ENCODE measurements at regions of chr2 and their contacts with region 1.

Region 1: DNA sequence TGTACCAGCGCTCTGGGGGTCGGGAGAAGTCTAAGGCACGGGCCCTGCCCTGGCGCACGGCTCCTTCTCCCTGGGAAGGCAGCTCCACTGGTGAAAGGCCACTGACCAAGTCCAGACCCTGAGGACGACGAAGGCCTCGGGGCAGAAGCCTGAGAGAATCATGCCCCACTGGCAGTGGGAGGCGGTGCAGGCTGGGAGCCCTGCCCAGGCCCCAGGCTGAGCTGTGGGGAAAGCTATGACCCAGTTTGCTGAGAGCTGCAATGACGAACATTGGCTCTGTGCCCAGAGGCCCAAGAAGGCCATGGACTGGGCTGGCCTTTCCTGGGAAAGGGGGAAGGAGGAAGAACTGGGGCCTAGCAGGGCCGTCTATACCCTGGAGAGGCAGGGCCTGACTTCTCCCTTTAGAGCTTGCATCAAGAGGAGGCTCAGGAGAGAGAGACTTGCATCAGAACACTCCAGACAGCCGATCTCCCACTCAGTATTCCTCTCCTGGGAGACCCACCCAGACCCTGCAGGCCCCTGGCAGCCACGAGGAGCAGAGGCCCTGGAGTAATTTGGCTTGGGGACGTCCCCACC is 32.9 kb downstream of the HS1BP3 start:
- DNase-seq: peak; percentile 98 to 99
- ATAC-seq: peak; percentile 92
- H3K4me3 ChIP-seq: no peak overlapping the region
- H3K27ac ChIP-seq: peak overlapping the region; percentile 89 to 99
- H3K4me1 ChIP-seq: peaks cover 2 to 5% of the 10 kb centered on the region in 2 donors
- H3K27me3 ChIP-seq: no peaks in the 10 kb centered on the region

Region 2: GRCh38 chr2:20516646-20517341 is 101.2 kb before region 1 on chr2:
- intact Hi-C with region 1: loop called in 1 of 2 experiments (anchors 10 kb)
- DNase-seq: no peak
- ATAC-seq: peak; percentile 56
- H3K4me3 ChIP-seq: no peak overlapping the region
- H3K27ac ChIP-seq: no peak overlapping the region
- H3K4me1 ChIP-seq: no peaks in the 10 kb centered on the region
- H3K27me3 ChIP-seq: no peaks in the 10 kb centered on the region

Region 3: DNA sequence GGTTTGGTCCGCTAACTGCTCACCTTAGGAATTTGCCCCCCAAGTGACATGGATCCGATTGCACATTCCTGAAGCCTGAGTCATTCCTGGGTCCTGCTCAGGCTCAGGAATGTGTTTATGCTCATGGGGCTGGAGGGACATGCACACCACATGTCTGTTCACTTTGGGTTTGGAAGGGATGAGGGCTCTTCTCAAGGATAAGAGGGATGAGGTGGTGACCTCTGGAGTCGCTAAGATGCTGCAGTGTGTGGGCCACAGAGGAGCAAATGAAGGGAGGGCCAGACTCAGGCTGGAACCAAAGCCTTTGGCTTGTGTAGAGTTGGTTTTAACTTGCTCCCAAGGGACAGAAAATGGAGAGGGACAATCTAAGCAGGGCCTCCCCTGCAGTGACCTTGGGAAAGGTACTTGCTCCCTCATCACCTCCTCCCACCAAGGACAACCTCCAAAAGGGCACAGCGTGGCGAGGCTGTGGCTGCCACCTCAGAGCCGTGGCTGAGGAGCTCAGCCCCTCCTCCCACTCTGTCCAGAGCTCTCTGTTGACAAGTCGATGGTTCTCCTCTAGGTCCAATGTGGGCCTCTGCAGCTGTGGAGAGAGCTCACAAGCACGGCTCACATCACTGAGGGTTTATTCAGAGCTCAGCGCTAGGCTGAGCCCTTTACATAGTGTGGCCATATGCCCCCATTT is 33.2 kb before region 1 on chr2:
- intact Hi-C with region 1: loop called in 1 of 2 experiments (anchors 5 kb)
- DNase-seq: peak; percentile 47 to 71
- ATAC-seq: peak; percentile 63
- H3K4me3 ChIP-seq: no peak overlapping the region
- H3K27ac ChIP-seq: peak overlapping the region in 1 of 2 donors; percentile 68
- H3K4me1 ChIP-seq: no peaks in the 10 kb centered on the region
- H3K27me3 ChIP-seq: no peaks in the 10 kb centered on the region